HepG2 (cell line): ENCODE measurements at regions of chr7 and their contacts with region 1.

Region 1: DNA sequence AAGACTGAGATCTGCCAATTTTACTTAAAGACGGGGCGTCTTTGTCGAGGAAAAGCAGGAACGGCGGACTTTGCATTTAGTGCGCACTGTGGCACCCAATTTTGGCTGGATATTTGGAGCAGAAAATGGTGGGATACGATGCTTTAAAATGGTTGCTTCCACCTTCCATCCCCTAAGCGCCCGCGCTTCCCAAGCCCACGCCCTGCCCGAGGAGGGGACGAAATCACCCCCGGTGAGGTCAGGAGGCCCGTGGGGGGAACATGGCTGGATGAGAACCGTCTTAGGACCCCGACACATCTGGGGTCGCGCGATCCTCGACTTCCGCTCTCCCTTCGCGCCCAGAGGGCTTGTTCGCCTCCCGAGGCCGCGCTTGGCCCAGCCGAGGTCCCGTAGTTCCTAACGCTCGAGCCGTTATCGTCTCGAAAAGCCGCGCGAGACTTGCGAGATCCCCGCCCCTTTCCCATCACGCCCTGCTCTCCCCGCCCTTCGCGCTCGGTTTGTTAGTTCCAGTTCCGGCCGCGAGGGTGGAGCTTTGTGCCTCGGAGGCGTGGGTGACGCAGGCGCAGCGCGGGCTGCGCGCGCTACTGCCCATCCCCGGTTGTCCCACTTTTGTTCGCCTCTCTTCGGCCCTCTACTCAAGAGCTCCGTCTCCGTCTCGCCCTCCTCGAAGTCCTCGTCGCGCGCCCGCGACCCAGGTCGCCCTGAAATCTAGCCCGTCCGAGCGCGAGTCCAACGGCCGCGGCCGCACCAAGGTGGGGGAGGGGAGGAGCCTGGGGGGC is at the start of gene SRRT:
- DNase-seq: peak; percentile 94
- ATAC-seq: peak; percentile 94
- H3K4me3 ChIP-seq: peak within 1 kb of the TSS; percentile 84 to 89 (median 86)
- H3K27ac ChIP-seq: peak within 1 kb of the TSS; percentile 87
- H3K4me1 ChIP-seq: peaks cover 45% of the 10 kb centered on the region
- H3K27me3 ChIP-seq: peaks cover 0 to 2% of the 10 kb centered on the region in 2 experiments; a peak in 1 of 5 replicates
- CTCF ChIP-seq: peak; percentile 16
- EP300 ChIP-seq: peak in 1 of 2 experiments; percentile 29; a peak in 1 of 4 replicates
- POLR2A ChIP-seq: peak; percentile 91 to 98
- RAD21 ChIP-seq: no peak; the same call in 1 of the 2 replicates
- total RNA-seq, gene SRRT: 79.1 and 106 TPM in 2 replicates

Region 2: DNA sequence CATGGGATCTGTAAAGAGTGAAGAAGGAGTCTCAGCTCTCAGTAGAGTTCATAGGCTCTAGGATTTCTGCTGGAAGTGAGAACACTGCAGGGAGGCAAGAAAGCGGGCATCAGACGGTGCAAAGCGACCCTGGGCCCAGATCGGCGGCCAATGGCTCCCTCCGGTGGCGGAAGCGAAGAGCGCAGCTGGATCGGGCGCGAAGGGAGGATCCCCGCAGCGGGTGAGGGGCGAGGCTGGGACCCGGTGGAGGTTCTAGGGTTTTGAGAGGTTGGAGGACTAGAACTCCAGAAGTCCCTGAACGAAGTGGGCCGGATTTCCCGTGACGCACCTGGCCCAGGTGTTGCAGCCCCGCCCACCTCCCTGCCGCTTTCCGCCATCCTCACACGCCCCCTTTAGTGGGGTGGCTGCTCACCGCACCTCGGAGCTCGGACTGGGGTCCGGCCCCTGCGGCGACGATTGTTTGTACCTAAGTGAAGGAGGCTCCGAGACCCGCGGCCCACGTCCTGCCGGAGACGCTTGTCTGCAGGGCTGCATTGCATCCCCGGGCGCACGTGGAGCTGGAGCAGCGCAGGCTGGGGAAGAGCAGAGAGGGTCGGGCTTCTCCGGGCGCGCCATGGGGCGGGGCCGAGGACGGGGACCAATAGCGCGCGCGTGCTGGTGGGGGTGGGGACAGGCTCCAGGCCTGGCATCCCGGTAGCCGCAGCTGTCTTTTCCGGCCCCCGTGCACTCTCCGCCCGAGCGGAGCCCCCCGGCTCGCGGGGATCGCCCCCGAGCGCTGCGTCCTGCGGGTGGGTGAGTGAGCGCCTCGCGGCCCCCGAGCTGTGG is 22.5 kb before region 1 on chr7 and contains the start of gene SLC12A9:
- CTCF ChIA-PET with region 1: no interaction called
- POLR2A ChIA-PET with region 1: interaction called, 25 read pairs
- in situ Hi-C with region 1: no loop called
- intact Hi-C with region 1: no loop called
- DNase-seq: peak; percentile 73
- ATAC-seq: peak; percentile 99
- H3K4me3 ChIP-seq: peak within 1 kb of the TSS; percentile 62 to 87 (median 85)
- H3K27ac ChIP-seq: no peak within 1 kb of the TSS
- H3K4me1 ChIP-seq: peaks cover 23% of the 10 kb centered on the region
- H3K27me3 ChIP-seq: no peaks in the 10 kb centered on the region; a peak in 1 of 5 replicates
- CTCF ChIP-seq: peak; percentile 97
- EP300 ChIP-seq: no peak
- POLR2A ChIP-seq: peak in 1 of 2 experiments; percentile 59; a peak in 2 of 4 replicates
- RAD21 ChIP-seq: peak; percentile 97
- total RNA-seq, gene SLC12A9: 5.4 and 16.6 TPM in 2 replicates

Region 3: GRCh38 chr7:101299511-101300464 is 425.0 kb after region 1 on chr7:
- CTCF ChIA-PET with region 1: no interaction called
- POLR2A ChIA-PET with region 1: no interaction called
- in situ Hi-C with region 1: loop called (anchors 25 kb)
- intact Hi-C with region 1: no loop called
- DNase-seq: no peak
- ATAC-seq: peak; percentile 94
- H3K4me3 ChIP-seq: peak overlapping the region; percentile 34 to 67 (median 37); a peak in 4 of 6 replicates
- H3K27ac ChIP-seq: no peak overlapping the region
- H3K4me1 ChIP-seq: peaks cover 13% of the 10 kb centered on the region; the same call in 1 of the 2 replicates
- H3K27me3 ChIP-seq: peaks cover 2 to 26% of the 10 kb centered on the region in 2 experiments
- CTCF ChIP-seq: peak; percentile 37; the same call in 1 of the 2 replicates
- EP300 ChIP-seq: no peak
- POLR2A ChIP-seq: no peak
- RAD21 ChIP-seq: no peak